HCT116 (cell line): ENCODE measurements at regions of chr6 and their contacts with region 1.

Region 1: DNA sequence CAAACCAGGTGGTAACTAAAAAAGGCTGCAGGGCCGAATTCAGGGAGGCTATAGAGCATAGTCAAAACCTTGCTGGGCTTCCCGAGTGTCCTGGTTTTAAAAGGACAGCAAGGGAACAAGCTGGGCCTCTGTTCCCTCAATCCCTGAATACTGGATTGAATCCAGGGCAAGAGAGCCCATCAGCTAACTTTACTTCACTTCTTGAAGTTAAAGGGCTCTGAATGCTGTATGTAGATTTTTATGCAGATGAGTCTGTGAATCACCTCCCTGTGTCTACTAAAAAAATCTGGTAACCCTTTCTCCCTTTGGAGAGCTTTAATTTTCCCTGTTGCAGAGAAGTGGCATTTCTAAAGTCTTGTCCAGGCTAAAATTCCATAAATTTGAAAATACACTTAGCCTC is 29.5 kb downstream of the LYRM4 start:
- DNase-seq: no peak
- ATAC-seq: no peak
- H3K4me3 ChIP-seq: no peak overlapping the region
- H3K27ac ChIP-seq: no peak overlapping the region
- H3K4me1 ChIP-seq: no peaks in the 10 kb centered on the region
- H3K27me3 ChIP-seq: no peaks in the 10 kb centered on the region
- CTCF ChIP-seq: no peak
- POLR2A ChIP-seq: no peak
- RAD21 ChIP-seq: no peak

Region 2: DNA sequence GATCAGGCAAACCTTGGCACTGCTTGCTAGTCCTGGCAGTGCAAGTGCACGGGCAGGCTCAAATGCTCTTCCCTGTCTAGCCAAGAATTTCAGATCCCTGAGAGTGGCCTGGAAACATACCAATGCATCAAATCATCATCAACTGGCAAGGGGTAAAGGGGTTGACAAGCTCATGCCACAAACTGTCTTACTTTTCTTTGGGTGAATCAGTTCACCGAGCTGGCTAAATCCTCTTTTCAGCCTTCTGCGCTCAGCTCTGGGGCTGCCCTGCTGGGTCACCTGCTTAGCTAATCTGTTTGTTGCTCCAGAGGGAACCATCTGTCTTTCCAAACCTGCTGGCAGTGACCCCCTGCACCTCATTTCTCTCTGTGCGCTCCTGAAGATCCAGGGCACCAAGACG is 30.0 kb before region 1 on chr6:
- CTCF ChIA-PET with region 1: no interaction called
- POLR2A ChIA-PET with region 1: no interaction called
- RAD21 ChIA-PET with region 1: no interaction called
- intact Hi-C with region 1: loop called (anchors 2 kb)
- DNase-seq: no peak
- ATAC-seq: no peak
- H3K4me3 ChIP-seq: no peak overlapping the region
- H3K27ac ChIP-seq: no peak overlapping the region
- H3K4me1 ChIP-seq: no peaks in the 10 kb centered on the region
- H3K27me3 ChIP-seq: no peaks in the 10 kb centered on the region
- CTCF ChIP-seq: no peak
- POLR2A ChIP-seq: no peak
- RAD21 ChIP-seq: no peak

Region 3: DNA sequence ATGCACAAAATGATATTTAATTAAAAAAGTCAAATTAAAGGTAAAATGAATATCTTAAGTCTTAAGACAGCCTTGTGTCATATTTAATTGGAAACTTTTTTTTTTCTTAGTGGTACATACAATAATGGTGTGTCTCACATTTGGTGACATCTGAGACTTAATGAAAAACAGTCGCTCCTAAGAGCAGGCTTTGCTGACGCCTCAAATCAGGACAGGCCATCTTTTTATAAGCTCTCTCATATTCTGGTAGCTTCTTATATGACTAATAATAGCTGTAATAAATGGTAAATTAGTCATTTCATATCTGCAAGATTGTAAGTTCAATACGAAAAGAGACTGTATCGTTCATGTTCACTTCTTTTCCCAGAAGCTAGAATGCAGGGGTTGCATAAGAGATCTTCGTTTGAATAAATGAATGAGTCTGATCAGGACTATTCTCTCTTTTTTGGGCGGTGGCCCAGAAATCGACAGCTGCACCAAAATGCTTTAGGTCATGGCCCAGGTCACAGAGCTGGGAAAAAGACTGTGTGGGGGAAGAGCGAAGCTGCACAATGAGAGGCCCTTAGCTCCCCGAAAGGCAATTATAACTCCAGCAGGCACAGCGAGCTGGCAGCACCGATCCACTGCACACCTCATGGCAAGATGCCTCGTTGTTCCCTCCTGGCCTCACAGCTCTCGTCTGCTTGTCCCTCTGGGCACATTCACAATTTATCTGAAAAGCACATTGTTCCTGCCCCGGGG is 706.0 kb after region 1 on chr6:
- CTCF ChIA-PET with region 1: no interaction called
- POLR2A ChIA-PET with region 1: no interaction called
- RAD21 ChIA-PET with region 1: no interaction called
- intact Hi-C with region 1: no loop called
- DNase-seq: no peak
- ATAC-seq: no peak
- H3K4me3 ChIP-seq: no peak overlapping the region
- H3K27ac ChIP-seq: no peak overlapping the region
- H3K4me1 ChIP-seq: no peaks in the 10 kb centered on the region
- H3K27me3 ChIP-seq: peaks cover 26% of the 10 kb centered on the region
- CTCF ChIP-seq: no peak
- POLR2A ChIP-seq: no peak
- RAD21 ChIP-seq: no peak